GM10248 (cell line): ENCODE measurements at regions of chr11 and their contacts with region 1.

Region 1: DNA sequence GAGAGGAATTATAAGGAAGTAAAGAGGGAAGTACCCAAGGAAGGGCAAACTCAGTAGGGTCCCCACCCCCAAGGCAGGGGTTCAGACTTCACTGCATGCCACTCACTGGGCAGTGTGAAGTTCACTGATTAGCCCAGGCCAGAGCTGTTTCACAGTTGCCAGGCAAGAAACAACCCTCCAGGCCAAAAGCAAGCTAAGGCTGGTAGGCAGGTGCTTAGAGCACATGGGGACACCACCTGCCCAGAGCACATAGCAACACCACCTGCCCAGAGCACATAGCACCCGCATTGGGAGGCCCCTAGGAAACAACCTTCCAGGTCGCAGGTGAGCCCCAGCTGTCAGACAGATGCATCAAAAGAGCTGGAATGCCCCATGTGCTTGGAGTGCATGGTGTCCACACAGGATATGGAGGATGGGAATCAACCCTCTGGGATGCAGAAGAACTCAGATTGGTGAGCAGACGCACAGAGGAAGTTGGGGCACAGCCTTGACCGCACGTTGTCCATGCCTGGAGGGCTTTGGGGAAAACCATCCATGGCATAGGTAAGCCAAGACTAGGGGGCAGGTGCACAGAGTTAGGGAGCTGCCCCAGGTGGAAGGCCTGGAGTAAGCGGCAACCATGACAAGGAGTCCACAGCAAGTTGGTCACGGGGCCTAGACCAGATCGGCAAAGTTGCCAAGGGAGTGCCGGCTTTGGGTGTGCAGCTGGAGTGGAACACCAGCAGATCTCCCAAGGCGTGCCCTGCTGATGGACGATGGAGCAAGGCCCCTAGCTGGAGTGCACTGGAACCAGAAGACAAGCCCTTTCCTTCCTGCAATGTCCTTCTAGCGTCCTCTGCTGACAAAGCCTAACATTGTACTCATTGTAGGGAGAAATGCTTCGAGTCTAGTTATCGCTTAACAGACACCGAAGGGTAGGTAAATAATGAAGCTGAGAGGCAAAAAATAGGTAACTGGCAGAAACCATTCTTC is 7.8 kb upstream of the TMEM216 start:
- DNase-seq: no peak
- CTCF ChIP-seq: no peak

Region 2: DNA sequence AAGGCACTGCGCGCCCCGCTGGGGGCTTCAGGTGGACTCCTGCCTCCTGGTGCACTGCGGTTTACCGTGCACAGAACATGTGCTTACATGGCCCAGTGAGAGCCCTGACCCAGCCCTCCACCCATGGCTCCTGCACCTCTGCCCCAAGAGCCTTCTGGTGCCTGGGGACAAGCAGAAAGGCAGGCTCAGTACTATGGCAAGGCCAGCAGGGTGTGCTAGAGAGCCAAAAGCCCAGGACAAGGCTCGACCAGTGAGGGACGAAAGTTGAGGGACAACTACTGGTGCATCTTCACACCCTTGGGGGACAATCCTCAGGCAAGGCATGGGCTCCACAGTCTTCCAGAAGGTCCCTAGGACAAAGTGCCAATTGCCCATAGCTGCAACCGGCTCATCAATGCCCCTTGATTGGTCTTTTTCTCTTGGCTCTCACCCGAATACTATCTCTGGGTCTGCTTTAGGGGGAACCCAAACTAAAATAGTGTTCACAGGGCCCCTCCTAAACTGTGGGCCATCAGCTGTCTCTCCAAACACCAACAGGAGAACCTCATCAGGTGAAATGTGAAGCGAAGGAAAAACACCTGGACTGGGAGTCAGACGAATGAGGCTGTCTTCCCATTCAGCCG is 130.0 kb before region 1 on chr11:
- CTCF ChIA-PET with region 1: interaction called, 80 read pairs
- POLR2A ChIA-PET with region 1: no interaction called
- DNase-seq: peak; percentile 91
- CTCF ChIP-seq: peak; percentile 98

Region 3: DNA sequence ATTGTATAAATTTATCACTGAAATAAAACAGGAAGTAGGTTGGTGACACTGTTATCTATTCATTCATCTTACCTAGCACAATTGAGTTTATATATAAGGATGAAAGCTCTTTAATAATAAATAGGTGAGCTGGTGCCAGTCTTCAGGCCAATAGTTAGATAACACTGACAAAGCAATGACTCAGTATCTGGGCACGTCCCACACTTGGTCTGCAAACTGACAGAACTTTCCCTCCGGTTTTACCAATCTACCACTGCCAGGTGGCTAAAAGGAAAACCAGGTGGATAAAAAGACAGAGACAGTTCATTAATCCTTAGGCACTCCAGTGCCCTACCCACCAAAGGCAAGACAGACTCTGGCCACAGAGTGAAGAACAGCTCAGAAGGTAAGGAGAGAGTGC is 69.3 kb before region 1 on chr11:
- CTCF ChIA-PET with region 1: interaction called, 23 read pairs
- POLR2A ChIA-PET with region 1: no interaction called
- DNase-seq: no peak
- CTCF ChIP-seq: no peak

Region 4: DNA sequence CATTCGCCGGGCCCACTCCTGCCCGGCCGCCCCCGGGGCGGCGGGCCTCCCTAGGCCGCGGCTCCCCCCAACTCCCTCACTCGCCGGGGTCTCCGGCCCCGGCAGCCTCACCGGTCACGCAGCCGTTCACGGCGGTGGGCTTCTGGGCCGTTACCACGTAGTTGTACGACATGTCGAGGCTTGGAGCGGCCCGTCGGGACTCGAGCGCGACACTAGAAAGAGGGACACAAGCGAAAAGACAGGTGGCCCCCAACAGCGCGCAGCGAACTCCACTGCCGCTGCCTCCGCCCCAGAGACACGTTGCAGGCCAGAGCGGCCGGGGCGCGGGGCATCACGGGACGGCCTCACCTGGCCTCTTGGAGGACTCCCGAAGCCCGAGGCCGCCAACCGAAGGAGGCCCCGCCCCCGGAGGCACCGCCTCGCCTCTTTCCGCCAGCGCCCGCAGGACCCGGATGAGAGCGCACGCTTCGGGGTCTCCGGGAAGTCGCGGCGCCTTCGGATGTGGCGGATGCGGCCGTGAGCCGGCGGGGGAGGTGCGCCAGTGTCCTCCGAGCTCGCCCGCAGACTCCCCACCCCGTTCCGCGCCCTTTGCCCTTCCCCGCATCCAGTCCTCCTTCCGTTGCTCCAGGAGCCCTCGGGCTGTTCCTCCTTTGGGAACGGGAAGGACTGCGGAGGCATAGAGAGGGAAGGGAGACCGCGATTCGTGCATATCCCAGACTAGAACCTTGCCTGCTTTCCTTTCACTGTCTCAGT is 51.6 kb before region 1 on chr11 and contains the starts of genes DDB1 and TKFC:
- CTCF ChIA-PET with region 1: interaction called, 501 read pairs
- POLR2A ChIA-PET with region 1: interaction called, 6 read pairs
- DNase-seq: peak; percentile 99
- CTCF ChIP-seq: no peak

Region 5: GRCh38 chr11:61361686-61362541 is 22.6 kb before region 1 on chr11 and contains the starts of genes CYB561A3 and TMEM138:
- CTCF ChIA-PET with region 1: interaction called, 188 read pairs
- POLR2A ChIA-PET with region 1: interaction called, 11 read pairs
- DNase-seq: peak; percentile 92
- CTCF ChIP-seq: no peak

Region 6: GRCh38 chr11:61406067-61406466 is 21.5 kb after region 1 on chr11:
- CTCF ChIA-PET with region 1: interaction called, 98 read pairs
- POLR2A ChIA-PET with region 1: no interaction called
- DNase-seq: no peak
- CTCF ChIP-seq: no peak

Region 7: GRCh38 chr11:61460474-61460881 is 75.9 kb after region 1 on chr11:
- CTCF ChIA-PET with region 1: no interaction called
- POLR2A ChIA-PET with region 1: no interaction called
- DNase-seq: no peak
- CTCF ChIP-seq: no peak

Region 8: DNA sequence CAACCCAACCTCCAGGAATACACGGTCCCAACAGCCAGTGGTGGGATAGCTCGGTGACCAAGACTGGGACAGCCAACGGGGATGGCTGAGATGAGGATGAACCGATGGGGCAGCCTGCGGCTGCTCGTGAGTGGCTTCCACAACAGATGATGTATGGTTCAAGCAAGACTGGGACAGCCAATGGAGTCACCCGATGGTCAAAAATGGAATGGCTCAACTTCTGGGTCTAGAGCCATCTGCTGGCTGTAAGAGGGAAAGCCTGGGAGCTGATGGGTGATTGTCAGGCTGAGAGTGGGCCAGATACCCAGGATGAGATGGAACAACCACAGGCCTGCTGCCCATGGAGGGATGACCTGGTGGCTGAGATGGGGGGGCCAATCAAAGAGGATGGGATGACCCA is 160.8 kb after region 1 on chr11:
- CTCF ChIA-PET with region 1: no interaction called
- POLR2A ChIA-PET with region 1: no interaction called
- DNase-seq: peak; percentile 54
- CTCF ChIP-seq: peak; percentile 15